HEK293 (cell line): ENCODE measurements at regions of chr12 and their contacts with region 1.

Region 1: GRCh38 chr12:47773062-47773857 is at the start of gene SLC48A1:
- H3K4me3 ChIP-seq: peak within 1 kb of the TSS; percentile 76
- H3K27ac ChIP-seq: peak within 1 kb of the TSS; percentile 75; the same call in 1 of the 2 replicates
- H3K4me1 ChIP-seq: no peaks in the 10 kb centered on the region; the same call in 1 of the 2 replicates
- CTCF ChIP-seq: peak; percentile 74

Region 2: DNA sequence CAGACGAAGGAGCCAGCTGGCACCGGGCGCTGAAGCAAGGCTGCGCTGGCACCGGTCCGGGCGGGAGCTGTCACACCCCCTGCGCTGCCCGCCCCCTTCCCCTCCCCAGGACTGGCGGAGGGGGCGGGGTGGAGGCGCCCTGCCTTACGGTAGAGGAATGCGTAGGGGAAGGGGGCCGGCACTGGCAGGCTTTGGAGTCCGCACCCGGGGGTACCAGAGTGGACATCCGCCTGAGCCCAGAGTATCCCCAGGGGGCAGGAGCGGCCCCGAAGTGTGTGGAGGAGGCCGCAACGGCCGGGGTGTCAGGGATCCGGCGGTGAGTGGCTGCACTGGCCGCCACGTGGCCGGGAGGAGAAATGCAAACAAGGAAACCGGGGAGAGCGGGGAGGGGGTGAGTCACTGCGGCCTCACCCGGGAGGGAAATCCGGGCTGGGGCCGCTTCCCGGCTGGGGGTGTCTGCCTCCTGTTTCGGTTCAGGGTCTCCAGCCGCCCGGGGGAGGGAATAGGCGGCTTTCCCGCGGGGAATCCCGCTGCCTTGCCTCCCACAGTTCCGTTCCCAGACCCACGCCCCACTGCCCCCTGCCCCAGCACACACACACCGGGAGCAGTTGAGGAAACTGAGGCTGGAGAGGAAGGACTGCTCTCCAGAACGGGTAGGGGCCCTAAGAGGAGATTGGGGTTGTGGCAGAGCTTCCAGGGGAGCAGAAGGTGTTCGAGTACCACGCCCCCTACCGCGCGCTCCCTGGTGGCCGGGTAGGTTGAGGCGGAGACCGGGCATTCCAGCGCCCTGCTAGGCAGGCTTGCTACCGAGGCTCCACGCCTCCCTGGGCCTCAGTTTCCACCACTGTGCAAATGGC is 14.2 kb before region 1 on chr12 and contains the start of gene RAPGEF3:
- CTCF ChIA-PET with region 1: interaction called, 108 read pairs
- POLR2A ChIA-PET with region 1: interaction called, 6 read pairs
- H3K4me3 ChIP-seq: peak within 1 kb of the TSS; percentile 46
- H3K27ac ChIP-seq: peak within 1 kb of the TSS; percentile 11; the same call in 1 of the 2 replicates
- H3K4me1 ChIP-seq: peaks cover 5% of the 10 kb centered on the region; the same call in 1 of the 2 replicates
- CTCF ChIP-seq: peak; percentile 71

Region 3: DNA sequence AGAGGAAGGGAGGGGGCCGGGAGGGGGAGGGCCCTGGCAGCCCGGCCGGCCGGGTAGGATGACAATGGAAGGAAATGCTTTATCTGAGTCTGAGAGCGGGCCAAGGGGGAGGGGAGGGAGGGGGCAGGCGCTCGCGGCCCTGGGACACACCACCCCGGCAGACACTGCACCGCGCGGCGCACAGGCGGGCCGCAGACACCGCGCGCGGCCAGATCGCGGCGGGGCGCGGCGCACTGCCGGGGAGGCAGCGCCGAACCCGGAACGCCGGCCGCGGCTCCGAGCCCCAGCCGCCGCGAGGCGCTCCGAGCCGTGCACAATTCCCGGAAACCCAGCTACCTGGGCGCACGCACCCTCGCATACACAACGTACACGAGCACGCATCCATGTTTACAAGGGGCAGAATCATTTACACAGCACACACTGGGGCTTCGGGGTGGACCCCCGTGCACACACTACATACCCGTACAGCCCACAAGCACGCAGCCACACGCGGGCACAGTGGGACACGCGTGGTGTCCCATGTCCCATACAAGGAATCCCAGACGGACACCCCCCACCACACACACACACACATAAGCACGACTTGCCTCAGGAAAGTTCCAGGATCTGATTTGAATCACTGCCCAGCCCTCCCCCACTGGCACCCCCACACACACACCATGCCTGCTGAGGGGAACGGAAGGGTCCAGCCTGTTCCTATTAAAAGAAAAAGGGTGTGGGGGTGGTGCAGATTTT is 46.8 kb after region 1 on chr12 and contains the start of gene HDAC7:
- CTCF ChIA-PET with region 1: interaction called, 10 read pairs
- POLR2A ChIA-PET with region 1: interaction called, 4 read pairs
- H3K4me3 ChIP-seq: peak within 1 kb of the TSS; percentile 67
- H3K27ac ChIP-seq: peak within 1 kb of the TSS; percentile 89
- H3K4me1 ChIP-seq: peaks cover 3% of the 10 kb centered on the region; the same call in 1 of the 2 replicates
- CTCF ChIP-seq: no peak; the same call in 1 of the 2 replicates